ENCODE measurements at regions of chr20 and their contacts with region 1.

Region 1: DNA sequence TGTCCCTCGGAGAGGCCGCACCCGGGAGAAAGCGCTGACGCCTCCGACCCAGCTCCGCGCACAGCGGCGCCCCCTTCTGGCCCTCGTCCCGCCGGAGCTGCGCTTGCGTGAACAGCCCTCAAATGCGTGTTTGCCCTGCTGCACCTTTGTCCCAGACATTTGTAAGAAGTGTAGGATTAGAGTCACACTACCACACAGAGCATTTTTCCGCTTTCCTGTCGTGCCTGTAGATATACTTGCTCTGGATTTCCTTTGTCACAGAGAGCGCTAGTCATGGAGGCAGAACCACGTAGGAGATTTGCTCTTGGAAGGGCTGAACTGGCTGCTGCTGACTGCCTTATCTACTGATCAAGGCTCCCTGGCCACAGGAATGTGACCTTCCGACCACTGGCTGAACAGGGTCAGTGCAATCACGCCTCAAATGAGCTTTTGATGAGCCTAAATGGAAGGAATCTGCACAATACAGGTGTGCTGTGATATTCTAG is 62.3 kb downstream of the PAX1 start:
- DNase-seq: no peak
- H3K4me3 ChIP-seq: no peak overlapping the region
- H3K27ac ChIP-seq: no peak overlapping the region
- H3K4me1 ChIP-seq: no peaks in the 10 kb centered on the region
- H3K27me3 ChIP-seq: no peaks in the 10 kb centered on the region
- CTCF ChIP-seq: no peak
- EP300 ChIP-seq: no peak
- POLR2A ChIP-seq: no peak

Region 2: GRCh38 chr20:21557241-21558020 is 210.3 kb before region 1 on chr20:
- intact Hi-C with region 1: no loop called
- DNase-seq: no peak
- H3K4me3 ChIP-seq: no peak overlapping the region
- H3K27ac ChIP-seq: no peak overlapping the region
- H3K4me1 ChIP-seq: no peaks in the 10 kb centered on the region
- H3K27me3 ChIP-seq: no peaks in the 10 kb centered on the region
- CTCF ChIP-seq: no peak
- EP300 ChIP-seq: no peak
- POLR2A ChIP-seq: no peak

Region 3: GRCh38 chr20:21632031-21632734 is 135.6 kb before region 1 on chr20:
- intact Hi-C with region 1: no loop called
- DNase-seq: no peak
- H3K4me3 ChIP-seq: no peak overlapping the region
- H3K27ac ChIP-seq: no peak overlapping the region
- H3K4me1 ChIP-seq: no peaks in the 10 kb centered on the region
- H3K27me3 ChIP-seq: no peaks in the 10 kb centered on the region
- CTCF ChIP-seq: no peak
- EP300 ChIP-seq: no peak
- POLR2A ChIP-seq: no peak

Region 4: GRCh38 chr20:21725892-21726291 is 41.9 kb before region 1 on chr20:
- intact Hi-C with region 1: no loop called
- DNase-seq: no peak
- H3K4me3 ChIP-seq: no peak overlapping the region
- H3K27ac ChIP-seq: no peak overlapping the region
- H3K4me1 ChIP-seq: no peaks in the 10 kb centered on the region
- H3K27me3 ChIP-seq: no peaks in the 10 kb centered on the region
- CTCF ChIP-seq: no peak
- EP300 ChIP-seq: no peak
- POLR2A ChIP-seq: no peak

Region 5: DNA sequence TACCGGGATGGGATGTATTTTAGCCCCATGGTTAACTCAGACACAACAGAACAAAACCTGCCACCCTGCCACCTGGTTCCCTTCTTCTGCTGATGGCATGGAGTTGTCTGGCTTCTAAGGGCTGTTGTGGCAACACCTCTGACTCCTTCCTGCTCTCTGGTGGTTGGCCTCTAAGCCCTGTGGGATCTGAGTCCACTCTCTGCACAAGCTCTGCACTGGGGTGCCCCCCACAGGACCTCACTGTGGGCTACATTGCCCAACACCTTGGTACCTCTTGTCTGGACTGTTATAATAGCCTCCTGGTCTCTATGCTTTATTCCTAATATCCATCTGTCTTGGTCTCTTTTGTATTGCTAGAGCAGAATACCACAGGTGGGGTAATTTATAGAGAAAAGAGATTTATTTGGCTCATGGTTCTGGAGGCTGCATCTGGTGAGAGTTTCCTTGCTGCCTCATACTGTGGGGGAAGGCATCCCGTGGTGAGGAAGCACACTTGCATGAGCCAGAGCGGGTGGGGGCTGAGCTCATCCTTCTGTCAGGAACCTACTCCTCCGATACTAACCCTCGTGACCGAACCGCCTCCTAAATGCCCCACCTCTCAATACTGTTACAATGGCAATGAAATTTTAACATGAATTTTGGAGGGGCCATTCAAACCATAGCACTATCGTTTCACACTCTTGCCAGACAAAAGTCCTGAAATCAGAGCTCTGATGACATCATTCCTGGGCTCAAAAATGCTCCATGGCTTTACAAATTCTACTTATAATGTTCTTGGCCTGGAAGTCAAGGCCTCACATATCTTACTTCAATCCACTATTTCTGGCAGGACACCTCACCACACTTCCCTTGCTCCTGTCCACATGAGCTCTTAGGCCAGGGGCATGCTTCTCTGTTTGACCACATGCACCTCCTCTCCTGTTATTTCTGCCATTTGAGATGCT is 64.9 kb after region 1 on chr20:
- intact Hi-C with region 1: loop called in 1 of 4 experiments (anchors 10 kb)
- DNase-seq: no peak
- H3K4me3 ChIP-seq: no peak overlapping the region
- H3K27ac ChIP-seq: no peak overlapping the region
- H3K4me1 ChIP-seq: no peaks in the 10 kb centered on the region
- H3K27me3 ChIP-seq: no peaks in the 10 kb centered on the region
- CTCF ChIP-seq: no peak
- EP300 ChIP-seq: no peak
- POLR2A ChIP-seq: no peak